Activated T-helper 1 cell treated with anti-CD3 and anti-CD28 coated beads, Interleukin-12 subunit alpha, Interleukin-12 subunit beta, Interleukin-2, Interleukin-4 antibody, amounts not matched to agents 30 ng/mL and 10 ng/mL and 1 ng/mL, durations not matched to agents 14 hours and 24 hours and 36 hours (primary cell): ENCODE measurements at regions of chr5 and their contacts with region 1.

Region 1: DNA sequence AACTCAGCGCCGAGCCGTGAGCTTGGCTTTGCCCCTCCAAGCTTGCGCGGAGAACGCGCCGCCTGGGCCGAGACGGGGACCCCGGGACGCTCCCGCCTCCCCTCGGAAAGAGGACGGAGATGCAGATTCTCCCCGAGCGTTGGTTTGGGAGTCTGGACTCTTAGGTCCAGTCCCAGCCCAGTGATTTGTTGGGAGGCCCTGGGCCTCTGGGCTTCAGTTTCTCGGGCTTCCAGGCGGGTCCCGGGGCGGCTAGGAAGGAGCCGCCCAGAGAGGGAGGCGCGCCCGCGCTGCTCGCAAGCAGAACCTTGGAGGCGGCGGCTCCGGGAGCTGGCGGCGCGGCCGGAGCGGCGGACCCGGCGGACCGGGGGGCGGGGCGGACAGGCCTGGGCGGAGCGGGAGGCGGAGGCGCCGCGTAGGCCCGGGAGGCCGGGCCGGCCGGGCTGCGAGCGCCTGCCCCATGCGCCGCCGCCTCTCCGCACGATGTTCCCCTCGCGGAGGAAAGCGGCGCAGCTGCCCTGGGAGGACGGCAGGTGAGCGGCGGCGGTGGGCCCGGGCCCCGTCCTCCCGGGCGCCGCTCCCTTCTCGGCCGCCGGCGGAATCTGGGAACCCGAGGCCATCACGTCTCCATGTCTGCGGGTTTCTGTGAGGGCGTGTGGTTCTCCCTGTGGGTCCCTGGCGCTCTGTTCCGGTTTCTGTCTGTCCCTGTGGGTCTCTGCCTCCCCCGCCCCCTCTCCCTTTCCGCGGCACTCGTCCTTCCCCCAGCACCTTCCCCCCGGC is at the start of gene B4GALT7:
- DNase-seq: peak; percentile 80
- H3K4me3 Mint-ChIP-seq: peak within 1 kb of the TSS; percentile 96
- H3K27ac Mint-ChIP-seq: peak within 1 kb of the TSS; percentile 95
- H3K4me1 Mint-ChIP-seq: peaks cover 30% of the 10 kb centered on the region
- H3K27me3 Mint-ChIP-seq: peaks cover 1% of the 10 kb centered on the region
- total RNA-seq, gene B4GALT7: 27.7 and 28.4 TPM in 2 replicates

Region 2: DNA sequence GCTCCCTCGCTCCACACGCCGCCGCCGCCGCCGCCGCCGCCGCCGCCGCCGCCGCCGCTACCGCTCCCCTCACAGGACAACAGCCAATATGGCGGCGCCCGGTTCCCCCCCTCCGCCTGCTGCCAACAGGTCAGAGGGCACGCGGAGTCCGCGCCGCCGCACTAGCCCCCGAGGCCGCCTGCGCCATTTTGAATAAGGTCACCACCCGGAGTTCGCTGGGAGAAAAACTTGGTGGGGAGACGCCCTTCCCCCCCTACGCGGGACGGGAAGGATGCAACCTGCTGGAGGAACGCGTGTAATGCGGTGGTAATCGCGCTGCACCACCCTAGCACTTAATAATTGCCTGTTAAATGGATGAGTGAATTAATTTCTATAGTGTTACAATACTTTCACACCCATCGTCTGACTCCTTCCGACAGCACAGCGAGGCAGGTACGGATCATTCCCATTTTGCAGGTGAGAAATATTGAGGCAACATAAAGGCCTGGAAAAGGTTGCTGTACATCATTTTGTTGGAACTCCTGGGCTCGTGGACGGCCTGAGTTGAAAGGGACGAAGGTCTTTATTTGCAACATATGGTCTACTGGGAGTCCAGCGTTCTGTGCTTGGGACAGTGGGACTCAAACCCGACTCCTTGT is 45.3 kb before region 1 on chr5 and contains the start of gene FAM193B:
- intact Hi-C with region 1: loop called (anchors 2 kb)
- DNase-seq: peak; percentile 94
- H3K4me3 Mint-ChIP-seq: peak within 1 kb of the TSS; percentile 88
- H3K27ac Mint-ChIP-seq: peak within 1 kb of the TSS; percentile 85
- H3K4me1 Mint-ChIP-seq: peaks cover 37% of the 10 kb centered on the region
- H3K27me3 Mint-ChIP-seq: no peaks in the 10 kb centered on the region
- total RNA-seq, gene FAM193B: 70.9 and 79.4 TPM in 2 replicates

Region 3: GRCh38 chr5:177611446-177612214 is 11.7 kb after region 1 on chr5:
- intact Hi-C with region 1: no loop called
- DNase-seq: no peak
- H3K4me3 Mint-ChIP-seq: no peak overlapping the region
- H3K27ac Mint-ChIP-seq: no peak overlapping the region
- H3K4me1 Mint-ChIP-seq: no peaks in the 10 kb centered on the region
- H3K27me3 Mint-ChIP-seq: no peaks in the 10 kb centered on the region

Region 4: DNA sequence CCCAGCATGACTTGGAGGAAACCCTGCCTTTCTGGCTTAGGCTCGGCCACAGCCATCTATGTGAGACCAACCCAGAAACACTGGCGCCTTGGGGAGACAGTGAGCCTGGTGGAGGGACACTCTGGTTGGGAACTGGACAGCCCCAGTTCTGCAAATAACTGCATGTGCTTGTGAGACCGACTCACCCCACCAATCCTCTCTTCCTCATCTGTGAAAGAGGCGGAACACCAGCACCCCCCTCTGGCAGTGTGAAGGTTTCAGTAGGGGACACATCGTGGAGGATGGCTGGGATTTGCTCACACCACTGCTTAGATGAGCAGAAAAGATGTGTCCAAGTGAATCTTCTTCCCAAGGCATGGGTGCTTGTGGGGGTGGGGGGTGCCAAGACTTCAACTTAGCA is 470.0 kb after region 1 on chr5:
- intact Hi-C with region 1: loop called (anchors 10 kb)
- DNase-seq: no peak
- H3K4me3 Mint-ChIP-seq: no peak overlapping the region
- H3K27ac Mint-ChIP-seq: no peak overlapping the region
- H3K4me1 Mint-ChIP-seq: no peaks in the 10 kb centered on the region
- H3K27me3 Mint-ChIP-seq: peaks cover 2% of the 10 kb centered on the region

Region 5: DNA sequence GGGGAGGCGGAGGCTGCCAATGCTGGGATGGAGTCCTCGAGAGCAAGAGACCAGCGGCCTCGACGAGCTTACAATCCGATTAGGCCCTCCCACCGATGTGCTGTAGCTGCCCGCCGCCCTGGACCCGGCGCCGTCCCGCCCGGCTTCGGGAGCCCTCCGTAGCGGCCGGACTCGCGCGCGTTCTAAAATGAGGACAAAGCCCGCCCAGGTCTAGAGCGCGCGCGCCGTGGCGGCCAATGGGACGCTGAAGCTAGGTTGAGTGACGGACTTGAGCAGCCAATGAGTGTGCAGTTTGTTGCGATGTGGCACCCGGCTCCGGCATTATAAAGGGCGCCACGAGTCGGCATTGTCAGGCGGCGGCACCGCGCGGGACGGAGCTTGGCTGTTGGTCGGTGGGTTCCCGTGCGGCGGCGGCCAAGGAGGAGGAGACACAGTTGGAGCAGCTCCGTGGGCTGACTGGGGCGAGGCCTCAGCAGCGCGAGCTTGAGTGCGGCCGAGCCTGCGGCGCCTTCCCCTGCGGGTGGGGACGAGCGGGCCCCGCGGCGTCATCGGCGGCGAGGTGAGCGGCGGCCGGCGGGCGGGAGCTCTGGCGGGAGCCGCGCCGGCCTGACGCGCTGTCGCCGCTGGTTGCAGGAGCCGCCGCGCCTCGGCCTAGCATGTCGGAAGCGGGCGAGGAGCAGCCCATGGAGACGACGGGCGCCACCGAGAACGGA is 604.4 kb after region 1 on chr5 and contains the start of gene HNRNPAB:
- intact Hi-C with region 1: loop called (anchors 1 kb)
- DNase-seq: peak; percentile 94
- H3K4me3 Mint-ChIP-seq: peak within 1 kb of the TSS; percentile 99
- H3K27ac Mint-ChIP-seq: peak within 1 kb of the TSS; percentile 100
- H3K4me1 Mint-ChIP-seq: peaks cover 35% of the 10 kb centered on the region
- H3K27me3 Mint-ChIP-seq: peaks cover 2% of the 10 kb centered on the region
- total RNA-seq, gene HNRNPAB: 459 and 472 TPM in 2 replicates